Activated CD4-positive, alpha-beta memory T cell treated with anti-CD3 and anti-CD28 coated beads for 36 hours (primary cell): ENCODE measurements at regions of chr1 and their contacts with region 1.

Region 1: GRCh38 chr1:110780600-110781484 is 92.1 kb upstream of the CD53 start:
- DNase-seq: peak; percentile 83
- H3K4me3 Mint-ChIP-seq: no peak overlapping the region
- H3K27ac Mint-ChIP-seq: no peak overlapping the region
- H3K4me1 Mint-ChIP-seq: peaks cover 29% of the 10 kb centered on the region
- H3K27me3 Mint-ChIP-seq: no peaks in the 10 kb centered on the region

Region 2: GRCh38 chr1:110495926-110496600 is 284.8 kb before region 1 on chr1:
- CTCF ChIA-PET with region 1: interaction called, 19 read pairs
- POLR2A ChIA-PET with region 1: no interaction called
- intact Hi-C with region 1: no loop called
- DNase-seq: peak; percentile 86
- H3K4me3 Mint-ChIP-seq: no peak overlapping the region
- H3K27ac Mint-ChIP-seq: no peak overlapping the region
- H3K4me1 Mint-ChIP-seq: no peaks in the 10 kb centered on the region
- H3K27me3 Mint-ChIP-seq: no peaks in the 10 kb centered on the region

Region 3: DNA sequence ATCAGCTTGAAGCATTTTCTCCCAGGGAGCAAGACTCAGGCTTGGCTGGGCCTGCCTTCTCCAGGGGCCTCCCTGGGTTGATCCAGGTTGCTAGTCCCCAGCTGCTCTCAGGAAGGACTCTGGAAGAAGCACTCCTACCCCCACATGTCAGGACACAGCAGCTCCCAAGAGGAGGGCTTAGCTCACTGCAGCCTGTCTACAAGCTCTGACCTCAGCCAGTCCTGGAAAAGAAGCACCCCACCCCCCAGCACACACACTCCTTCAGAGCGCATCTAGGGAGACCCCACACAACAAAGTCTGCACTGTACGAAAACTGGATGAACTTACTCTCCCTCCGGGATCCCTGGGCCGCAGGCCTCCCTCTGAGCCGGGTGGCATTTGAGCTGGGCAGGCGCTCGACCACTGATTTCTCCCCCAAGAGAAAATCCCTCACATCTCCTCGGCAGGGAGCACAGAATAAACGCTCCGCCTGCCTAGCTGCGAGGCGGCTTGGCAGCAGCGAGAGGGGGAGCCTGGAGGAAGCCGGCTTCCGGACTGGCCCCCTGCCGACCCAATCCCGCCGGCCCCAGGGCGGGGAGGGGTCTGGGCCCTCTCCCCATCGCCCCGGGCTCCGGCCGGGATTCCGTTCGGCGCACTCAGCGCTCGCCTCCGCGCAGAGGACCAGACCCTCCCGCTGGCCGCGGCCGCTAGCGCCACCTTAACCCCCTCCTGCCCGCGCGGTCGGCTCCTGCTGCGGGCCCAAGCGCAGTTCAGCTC is 174.8 kb before region 1 on chr1 and contains the start of gene KCNA2:
- CTCF ChIA-PET with region 1: interaction called, 20 read pairs
- POLR2A ChIA-PET with region 1: no interaction called
- intact Hi-C with region 1: no loop called
- DNase-seq: no peak
- H3K4me3 Mint-ChIP-seq: peak within 1 kb of the TSS; percentile 74
- H3K27ac Mint-ChIP-seq: no peak within 1 kb of the TSS
- H3K4me1 Mint-ChIP-seq: peaks cover 17% of the 10 kb centered on the region
- H3K27me3 Mint-ChIP-seq: peaks cover 44% of the 10 kb centered on the region
- total RNA-seq, gene KCNA2: 0.24 to 0.36 TPM

Region 4: DNA sequence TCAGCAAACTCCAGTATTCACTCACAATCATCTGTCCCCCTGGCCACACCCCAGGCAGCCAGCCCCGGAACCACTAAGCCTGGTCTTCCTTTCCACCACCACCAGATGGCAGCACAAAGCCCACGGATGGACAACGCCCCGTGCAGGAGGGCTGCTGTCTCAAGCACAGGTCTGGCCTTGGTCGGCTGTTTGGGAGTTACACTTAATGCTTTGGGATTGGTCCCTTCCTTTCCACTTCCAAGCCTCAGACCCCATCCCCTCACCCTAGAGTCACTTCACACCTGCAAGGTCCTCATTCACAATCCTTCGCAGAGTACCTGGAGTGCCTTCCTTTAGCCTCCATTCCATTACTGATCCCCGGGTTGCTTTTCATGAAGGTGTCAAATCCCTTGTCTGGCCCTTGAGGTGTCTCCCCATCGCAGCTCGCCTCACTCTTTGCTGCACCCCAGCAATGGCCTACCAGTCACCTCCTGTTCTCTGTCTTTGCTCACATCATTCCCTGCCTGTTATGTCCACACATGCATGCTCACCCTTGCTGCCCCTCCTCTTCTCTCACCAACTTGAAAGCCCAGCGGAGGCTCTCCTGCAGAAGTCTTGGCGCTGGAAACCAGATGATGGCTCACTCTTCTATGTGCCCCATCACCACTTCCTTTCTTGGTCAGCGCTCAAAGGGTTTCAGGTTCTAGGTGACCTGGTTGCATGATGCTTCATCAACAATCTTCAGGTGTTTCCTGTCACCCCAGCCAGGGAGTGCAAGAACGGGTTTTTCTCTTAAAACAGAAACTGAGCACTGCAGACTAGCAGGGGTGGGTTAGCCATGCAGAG is 149.8 kb before region 1 on chr1:
- CTCF ChIA-PET with region 1: interaction called, 45 read pairs
- POLR2A ChIA-PET with region 1: no interaction called
- intact Hi-C with region 1: loop called (anchors 1 kb)
- DNase-seq: peak; percentile 92
- H3K4me3 Mint-ChIP-seq: no peak overlapping the region
- H3K27ac Mint-ChIP-seq: no peak overlapping the region
- H3K4me1 Mint-ChIP-seq: peaks cover 66% of the 10 kb centered on the region
- H3K27me3 Mint-ChIP-seq: no peaks in the 10 kb centered on the region

Region 5: GRCh38 chr1:110749960-110750359 is 30.9 kb before region 1 on chr1:
- CTCF ChIA-PET with region 1: no interaction called
- POLR2A ChIA-PET with region 1: no interaction called
- intact Hi-C with region 1: no loop called
- DNase-seq: no peak
- H3K4me3 Mint-ChIP-seq: no peak overlapping the region
- H3K27ac Mint-ChIP-seq: no peak overlapping the region
- H3K4me1 Mint-ChIP-seq: no peaks in the 10 kb centered on the region
- H3K27me3 Mint-ChIP-seq: peaks cover 6% of the 10 kb centered on the region

Region 6: GRCh38 chr1:110766025-110766647 is 14.7 kb before region 1 on chr1:
- CTCF ChIA-PET with region 1: interaction called, 58 read pairs
- POLR2A ChIA-PET with region 1: no interaction called
- intact Hi-C with region 1: loop called (anchors 1 kb)
- DNase-seq: peak; percentile 58
- H3K4me3 Mint-ChIP-seq: peak overlapping the region; percentile 40
- H3K27ac Mint-ChIP-seq: no peak overlapping the region
- H3K4me1 Mint-ChIP-seq: peaks cover 3% of the 10 kb centered on the region
- H3K27me3 Mint-ChIP-seq: peaks cover 12% of the 10 kb centered on the region

Region 7: GRCh38 chr1:110872745-110873720 is 92.2 kb after region 1 on chr1 and contains the start of gene CD53:
- CTCF ChIA-PET with region 1: interaction called, 12 read pairs
- POLR2A ChIA-PET with region 1: no interaction called
- intact Hi-C with region 1: no loop called
- DNase-seq: peak; percentile 63
- H3K4me3 Mint-ChIP-seq: peak within 1 kb of the TSS; percentile 98
- H3K27ac Mint-ChIP-seq: peak within 1 kb of the TSS; percentile 99
- H3K4me1 Mint-ChIP-seq: peaks cover 37% of the 10 kb centered on the region
- H3K27me3 Mint-ChIP-seq: no peaks in the 10 kb centered on the region
- total RNA-seq, gene CD53: 240 to 246 TPM